ENCODE measurements at regions of chr13 and their contacts with region 1.

Region 1: DNA sequence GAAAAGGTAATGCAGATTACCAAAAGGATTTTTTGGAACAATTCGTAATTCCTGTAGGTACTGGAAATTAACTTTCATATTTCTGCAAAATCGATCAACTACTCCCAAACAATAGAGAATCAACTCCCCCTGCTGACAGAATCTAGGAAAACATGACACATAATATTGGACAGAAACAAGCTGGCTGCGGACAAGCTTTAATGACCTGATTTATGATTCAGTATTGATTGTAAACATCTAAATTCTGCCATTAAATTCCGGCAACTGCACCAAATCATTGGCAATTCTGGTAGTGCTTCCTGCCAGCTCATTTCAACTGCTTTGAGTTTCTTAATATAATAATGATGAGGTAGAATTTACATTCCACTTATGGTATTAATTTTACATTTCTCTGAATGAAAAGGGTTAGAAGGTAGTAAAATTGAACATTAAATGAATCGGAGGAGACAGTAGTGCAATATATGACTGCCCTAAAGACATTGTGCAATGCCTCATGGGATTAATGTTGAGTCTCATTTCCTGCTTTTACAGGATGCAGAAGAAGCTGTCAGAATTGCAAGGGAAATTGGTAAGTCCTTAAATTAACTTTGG is 146.5 kb downstream of the PCCA start:
- DNase-seq: no peak
- ATAC-seq: no peak
- H3K4me3 ChIP-seq: no peak overlapping the region
- H3K27ac ChIP-seq: no peak overlapping the region
- H3K4me1 ChIP-seq: no peaks in the 10 kb centered on the region
- H3K27me3 ChIP-seq: no peaks in the 10 kb centered on the region

Region 2: DNA sequence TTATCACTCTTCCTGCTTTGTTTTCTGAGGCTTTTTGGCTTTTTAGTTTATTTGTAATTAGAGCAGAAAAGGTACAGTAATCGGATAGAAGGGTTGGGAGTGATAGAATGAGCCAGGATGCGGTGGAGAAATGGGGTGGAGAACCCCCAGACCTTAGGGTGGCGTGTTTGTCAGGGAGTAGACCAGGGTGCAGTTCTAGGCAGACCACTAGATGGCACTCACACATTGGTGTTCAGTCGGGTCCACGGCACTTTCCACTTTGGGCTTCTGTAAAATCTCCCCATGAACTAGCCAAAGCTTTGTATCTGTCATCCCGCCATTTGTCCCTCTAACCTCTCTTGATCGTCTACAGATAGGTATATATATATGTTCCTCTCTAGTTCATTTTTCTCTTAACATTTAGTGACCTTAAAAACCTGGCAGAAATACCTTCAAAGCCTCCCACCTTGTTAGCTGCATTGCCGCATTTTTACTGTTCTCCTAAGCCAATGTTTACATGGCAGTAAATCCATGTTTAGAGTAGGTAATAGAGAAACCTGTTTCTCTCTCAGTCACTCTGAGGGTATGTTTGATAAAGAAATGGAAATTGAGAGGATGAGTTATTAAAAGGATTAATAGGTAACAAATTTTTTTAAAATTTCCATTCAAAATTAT is 579.2 kb before region 1 on chr13:
- intact Hi-C with region 1: loop called (anchors 5 to 10 kb)
- DNase-seq: peak; percentile 73 to 85 (median 78)
- ATAC-seq: peak; percentile 72 to 74
- H3K4me3 ChIP-seq: no peak overlapping the region
- H3K27ac ChIP-seq: no peak overlapping the region
- H3K4me1 ChIP-seq: no peaks in the 10 kb centered on the region
- H3K27me3 ChIP-seq: no peaks in the 10 kb centered on the region